CD4-positive, alpha-beta memory T cell (primary cell): ENCODE measurements at regions of chrX and their contacts with region 1.

Region 1: DNA sequence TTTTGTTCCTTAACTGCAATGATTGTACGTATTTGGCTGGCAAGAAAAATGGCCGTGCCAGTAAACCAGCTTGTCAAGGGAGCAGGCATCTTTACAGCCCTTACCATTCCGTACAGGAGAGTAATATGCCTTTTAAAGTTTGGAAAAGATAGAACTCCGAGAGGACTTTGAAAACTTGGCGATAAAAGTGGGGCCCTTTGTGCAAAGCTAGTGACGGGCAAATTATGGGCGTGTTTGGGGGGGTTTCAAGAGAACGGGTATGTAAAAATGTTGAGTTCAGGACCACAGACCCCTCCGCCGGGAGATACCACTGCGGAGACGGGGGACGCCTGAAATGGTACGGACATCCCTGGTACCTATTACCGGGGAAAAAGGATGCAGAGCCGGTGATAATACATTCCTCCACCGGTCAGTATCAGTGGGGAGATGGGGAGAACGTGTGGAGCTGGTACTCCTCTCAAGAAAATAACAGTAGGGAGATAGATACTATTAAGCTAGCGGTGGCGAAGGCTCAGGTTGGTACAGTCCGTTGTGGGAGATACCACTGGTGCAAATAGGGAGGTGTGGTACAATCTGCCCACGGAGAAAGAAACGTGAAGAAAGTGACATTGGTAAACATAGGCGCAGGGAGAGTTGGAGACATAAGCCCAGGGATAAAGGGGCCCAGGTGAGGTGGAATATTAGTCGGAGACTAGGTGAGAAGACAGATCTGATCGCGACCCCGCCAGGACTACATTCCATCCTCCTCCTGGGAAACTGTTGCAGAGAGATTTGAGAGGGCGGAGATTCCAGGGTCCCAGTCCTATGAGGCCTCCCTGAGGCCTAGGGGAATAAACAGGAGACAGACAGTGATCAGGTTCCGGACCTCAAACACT is 14.5 kb downstream of the SPACA5 start:
- DNase-seq: peak; percentile 81 to 87 (median 86)
- H3K4me3 ChIP-seq: peak overlapping the region; percentile 84 to 96
- H3K4me3 Mint-ChIP-seq: peak overlapping the region; percentile 90 to 96 (median 92)
- H3K27ac ChIP-seq: peak overlapping the region; percentile 72
- H3K27ac Mint-ChIP-seq: peak overlapping the region; percentile 90 to 98 (median 95)
- H3K4me1 ChIP-seq: peaks cover 4% of the 10 kb centered on the region
- H3K4me1 Mint-ChIP-seq: peaks cover 4 to 23% (median 13%) of the 10 kb centered on the region in 4 donors
- H3K27me3 ChIP-seq: no peaks in the 10 kb centered on the region
- H3K27me3 Mint-ChIP-seq: no peaks in the 10 kb centered on the region

Region 2: DNA sequence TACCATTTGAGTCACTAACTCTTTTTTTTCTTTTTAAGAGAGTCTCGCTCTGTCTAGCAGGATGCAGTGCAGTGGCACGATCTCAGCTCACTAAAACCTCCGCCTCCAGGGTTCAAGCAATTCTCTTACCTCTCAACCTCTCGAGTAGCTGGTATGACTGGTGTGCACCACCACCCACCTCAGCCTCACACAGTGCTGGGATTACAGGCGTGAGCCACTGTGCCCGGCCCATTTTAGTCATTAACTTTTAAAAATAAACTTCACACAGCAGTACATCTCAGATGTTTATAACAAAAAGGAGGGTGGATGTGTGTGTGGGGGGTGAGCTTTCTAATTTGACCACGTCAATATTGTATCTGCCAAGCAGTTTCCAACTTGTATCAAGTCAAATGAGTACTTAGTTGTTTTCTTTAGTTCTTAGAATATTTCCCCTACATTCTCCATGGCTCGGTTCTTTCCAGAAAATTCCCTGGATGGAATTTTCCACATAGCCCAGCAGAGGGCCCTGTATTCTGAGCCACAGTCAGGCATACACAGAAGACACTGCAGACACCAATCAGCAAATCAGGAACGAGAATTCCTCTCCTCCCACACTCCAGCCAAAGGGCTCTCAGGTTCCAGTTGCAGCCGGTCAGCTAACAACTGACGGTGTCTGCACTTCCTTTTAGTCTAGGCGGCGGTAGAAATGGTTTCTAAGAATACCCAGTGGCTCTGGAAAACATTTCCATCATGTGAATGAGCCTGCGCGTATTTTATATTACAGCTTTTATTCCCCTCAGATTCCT is 480.3 kb before region 1 on chrX:
- CTCF ChIA-PET with region 1: no interaction called
- POLR2A ChIA-PET with region 1: no interaction called
- intact Hi-C with region 1: loop called (anchors 1 kb)
- DNase-seq: no peak
- H3K4me3 ChIP-seq: no peak overlapping the region
- H3K4me3 Mint-ChIP-seq: no peak overlapping the region
- H3K27ac ChIP-seq: no peak overlapping the region
- H3K27ac Mint-ChIP-seq: no peak overlapping the region
- H3K4me1 ChIP-seq: no peaks in the 10 kb centered on the region
- H3K4me1 Mint-ChIP-seq: no peaks in the 10 kb centered on the region
- H3K27me3 ChIP-seq: no peaks in the 10 kb centered on the region
- H3K27me3 Mint-ChIP-seq: no peaks in the 10 kb centered on the region

Region 3: GRCh38 chrX:47658684-47659515 is 362.4 kb before region 1 on chrX and contains the start of gene UXT:
- CTCF ChIA-PET with region 1: no interaction called
- POLR2A ChIA-PET with region 1: no interaction called
- intact Hi-C with region 1: loop called (anchors 2 kb)
- DNase-seq: peak; percentile 89 to 96 (median 93)
- H3K4me3 ChIP-seq: peak within 1 kb of the TSS; percentile 61 to 90
- H3K4me3 Mint-ChIP-seq: peak within 1 kb of the TSS; percentile 87 to 93 (median 91)
- H3K27ac ChIP-seq: peak within 1 kb of the TSS; percentile 95
- H3K27ac Mint-ChIP-seq: peak within 1 kb of the TSS; percentile 96 to 99 (median 98)
- H3K4me1 ChIP-seq: peaks cover 16% of the 10 kb centered on the region
- H3K4me1 Mint-ChIP-seq: peaks cover 3 to 28% (median 8%) of the 10 kb centered on the region in 4 donors
- H3K27me3 ChIP-seq: no peaks in the 10 kb centered on the region
- H3K27me3 Mint-ChIP-seq: no peaks in the 10 kb centered on the region
- total RNA-seq, gene UXT: 172 to 188 TPM

Region 4: DNA sequence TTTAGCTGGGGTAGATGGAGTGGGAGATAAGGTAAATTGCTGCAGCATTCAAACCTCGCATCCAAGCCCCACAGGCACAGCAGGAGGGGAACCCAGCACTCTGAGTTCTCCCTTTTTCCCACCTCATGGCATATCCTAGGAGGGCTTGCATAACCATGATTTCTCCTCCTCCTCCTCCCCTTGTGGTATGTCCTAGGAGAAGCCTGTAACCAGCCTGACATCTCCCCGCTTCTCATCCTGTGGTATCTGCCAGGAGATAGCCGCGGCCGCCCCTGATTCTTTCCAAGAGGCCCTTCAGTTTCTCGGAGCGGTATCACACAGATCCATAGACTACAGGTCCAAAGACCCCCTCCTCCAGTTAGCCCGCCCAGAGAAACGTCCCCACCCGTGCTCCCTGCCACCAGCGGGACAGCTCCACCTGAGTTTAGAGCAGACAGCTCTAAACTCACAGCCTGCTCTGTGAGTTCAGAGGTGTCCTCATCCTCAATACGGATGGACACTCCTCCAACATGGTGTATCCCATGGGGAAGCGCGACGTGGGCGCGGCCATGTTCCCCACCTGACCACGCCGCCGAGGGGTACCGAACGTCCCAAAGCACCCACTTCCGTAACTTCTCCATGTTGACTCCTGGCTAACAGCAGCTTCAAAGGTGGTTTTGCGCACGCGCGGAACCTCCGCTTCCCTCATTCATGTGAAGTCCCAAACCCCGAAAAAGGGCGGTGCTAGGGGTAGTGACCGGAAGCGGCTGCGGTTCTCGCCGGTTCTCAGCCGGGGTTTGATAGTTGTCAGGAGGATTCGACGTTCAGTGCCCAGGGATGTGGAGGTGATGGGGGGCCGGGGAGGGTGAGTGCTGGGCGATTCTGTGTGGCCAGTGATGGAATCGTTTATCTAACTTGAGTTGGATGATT is 184.8 kb before region 1 on chrX and contains the start of gene ZNF81:
- CTCF ChIA-PET with region 1: interaction called, 25 read pairs
- POLR2A ChIA-PET with region 1: interaction called, 10 read pairs
- intact Hi-C with region 1: loop called (anchors 1 kb)
- DNase-seq: peak; percentile 86 to 95 (median 88)
- H3K4me3 ChIP-seq: peak within 1 kb of the TSS; percentile 78 to 84
- H3K4me3 Mint-ChIP-seq: peak within 1 kb of the TSS; percentile 92 to 98 (median 97)
- H3K27ac ChIP-seq: peak within 1 kb of the TSS; percentile 62
- H3K27ac Mint-ChIP-seq: peak within 1 kb of the TSS; percentile 92 to 99 (median 98)
- H3K4me1 ChIP-seq: peaks cover 16% of the 10 kb centered on the region
- H3K4me1 Mint-ChIP-seq: peaks cover 6 to 24% (median 13%) of the 10 kb centered on the region in 4 donors
- H3K27me3 ChIP-seq: no peaks in the 10 kb centered on the region
- H3K27me3 Mint-ChIP-seq: no peaks in the 10 kb centered on the region
- total RNA-seq, gene ZNF81: 9.9 to 11.5 TPM

Region 5: GRCh38 chrX:47854474-47854873 is 166.8 kb before region 1 on chrX:
- CTCF ChIA-PET with region 1: interaction called, 18 read pairs
- POLR2A ChIA-PET with region 1: interaction called, 3 read pairs
- intact Hi-C with region 1: loop called (anchors 1 kb)
- DNase-seq: peak in 4 of 5 donors; percentile 8 to 40 (median 23)
- H3K4me3 ChIP-seq: no peak overlapping the region
- H3K4me3 Mint-ChIP-seq: no peak overlapping the region
- H3K27ac ChIP-seq: no peak overlapping the region
- H3K27ac Mint-ChIP-seq: no peak overlapping the region
- H3K4me1 ChIP-seq: no peaks in the 10 kb centered on the region
- H3K4me1 Mint-ChIP-seq: peaks cover 0 to 8% (median 3%) of the 10 kb centered on the region in 4 donors
- H3K27me3 ChIP-seq: no peaks in the 10 kb centered on the region
- H3K27me3 Mint-ChIP-seq: no peaks in the 10 kb centered on the region

Region 6: GRCh38 chrX:47958761-47959342 is 62.4 kb before region 1 on chrX:
- CTCF ChIA-PET with region 1: interaction called, 3 read pairs
- POLR2A ChIA-PET with region 1: interaction called, 3 read pairs
- intact Hi-C with region 1: loop called (anchors 1 kb)
- DNase-seq: peak in 4 of 5 donors; percentile 15 to 31 (median 23)
- H3K4me3 ChIP-seq: no peak overlapping the region
- H3K4me3 Mint-ChIP-seq: no peak overlapping the region
- H3K27ac ChIP-seq: no peak overlapping the region
- H3K27ac Mint-ChIP-seq: peak overlapping the region in 1 of 7 donors; percentile 69
- H3K4me1 ChIP-seq: no peaks in the 10 kb centered on the region
- H3K4me1 Mint-ChIP-seq: no peaks in the 10 kb centered on the region
- H3K27me3 ChIP-seq: no peaks in the 10 kb centered on the region
- H3K27me3 Mint-ChIP-seq: no peaks in the 10 kb centered on the region

Region 7: DNA sequence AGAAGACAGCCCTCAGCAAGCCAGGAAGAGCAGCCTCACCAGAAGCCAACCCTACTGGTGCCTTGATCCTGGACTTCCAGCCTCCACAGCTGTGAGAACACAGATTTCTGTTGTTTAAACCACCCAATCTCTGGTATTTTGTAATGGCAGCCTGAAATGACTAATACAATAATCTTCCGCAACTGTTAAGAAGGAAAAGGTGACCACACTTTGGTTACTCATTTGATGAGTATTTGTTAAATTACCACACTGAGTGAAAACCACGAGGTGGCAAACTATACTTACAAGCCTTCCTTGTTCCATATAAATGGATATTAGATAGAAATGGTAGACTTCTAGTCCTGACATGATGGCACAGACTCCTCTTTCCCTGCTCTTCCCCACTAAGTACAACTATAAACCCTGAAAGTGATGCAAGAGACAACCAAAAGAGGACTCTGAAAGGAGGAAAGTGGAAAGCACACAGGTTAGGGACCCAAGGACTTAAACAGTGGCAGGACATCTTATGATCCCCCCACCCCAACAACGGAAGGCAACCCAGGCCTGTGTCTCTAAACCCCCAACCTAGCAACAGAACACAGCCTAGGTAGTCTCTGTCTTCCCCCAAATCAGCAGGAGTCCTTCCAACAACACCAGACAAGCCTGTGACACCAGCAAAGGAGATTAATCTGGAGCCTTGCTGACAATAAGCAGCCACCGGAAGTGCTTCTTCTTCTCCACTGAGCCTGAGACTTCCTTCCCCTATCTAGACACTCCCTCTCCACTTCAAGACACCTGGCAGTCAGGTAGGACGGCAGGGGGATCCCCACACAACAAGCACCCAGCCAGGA is 29.8 kb before region 1 on chrX:
- CTCF ChIA-PET with region 1: no interaction called
- POLR2A ChIA-PET with region 1: no interaction called
- intact Hi-C with region 1: loop called (anchors 5 kb)
- DNase-seq: peak in 3 of 5 donors; percentile 3 to 35 (median 7)
- H3K4me3 ChIP-seq: no peak overlapping the region
- H3K4me3 Mint-ChIP-seq: peak overlapping the region in 4 of 8 donors; percentile 17 to 61 (median 29)
- H3K27ac ChIP-seq: no peak overlapping the region
- H3K27ac Mint-ChIP-seq: peak overlapping the region in 4 of 7 donors; percentile 16 to 85 (median 54)
- H3K4me1 ChIP-seq: peaks cover 16% of the 10 kb centered on the region
- H3K4me1 Mint-ChIP-seq: peaks cover 9 to 38% (median 20%) of the 10 kb centered on the region in 4 donors
- H3K27me3 ChIP-seq: no peaks in the 10 kb centered on the region
- H3K27me3 Mint-ChIP-seq: no peaks in the 10 kb centered on the region

Region 8: GRCh38 chrX:48058621-48059295 is 37.5 kb after region 1 on chrX:
- CTCF ChIA-PET with region 1: no interaction called
- POLR2A ChIA-PET with region 1: no interaction called
- intact Hi-C with region 1: no loop called
- DNase-seq: no peak
- H3K4me3 ChIP-seq: no peak overlapping the region
- H3K4me3 Mint-ChIP-seq: no peak overlapping the region
- H3K27ac ChIP-seq: no peak overlapping the region
- H3K27ac Mint-ChIP-seq: no peak overlapping the region
- H3K4me1 ChIP-seq: no peaks in the 10 kb centered on the region
- H3K4me1 Mint-ChIP-seq: no peaks in the 10 kb centered on the region
- H3K27me3 ChIP-seq: no peaks in the 10 kb centered on the region
- H3K27me3 Mint-ChIP-seq: no peaks in the 10 kb centered on the region